ENCODE measurements at regions of chr1 and their contacts with region 1.

Region 1: DNA sequence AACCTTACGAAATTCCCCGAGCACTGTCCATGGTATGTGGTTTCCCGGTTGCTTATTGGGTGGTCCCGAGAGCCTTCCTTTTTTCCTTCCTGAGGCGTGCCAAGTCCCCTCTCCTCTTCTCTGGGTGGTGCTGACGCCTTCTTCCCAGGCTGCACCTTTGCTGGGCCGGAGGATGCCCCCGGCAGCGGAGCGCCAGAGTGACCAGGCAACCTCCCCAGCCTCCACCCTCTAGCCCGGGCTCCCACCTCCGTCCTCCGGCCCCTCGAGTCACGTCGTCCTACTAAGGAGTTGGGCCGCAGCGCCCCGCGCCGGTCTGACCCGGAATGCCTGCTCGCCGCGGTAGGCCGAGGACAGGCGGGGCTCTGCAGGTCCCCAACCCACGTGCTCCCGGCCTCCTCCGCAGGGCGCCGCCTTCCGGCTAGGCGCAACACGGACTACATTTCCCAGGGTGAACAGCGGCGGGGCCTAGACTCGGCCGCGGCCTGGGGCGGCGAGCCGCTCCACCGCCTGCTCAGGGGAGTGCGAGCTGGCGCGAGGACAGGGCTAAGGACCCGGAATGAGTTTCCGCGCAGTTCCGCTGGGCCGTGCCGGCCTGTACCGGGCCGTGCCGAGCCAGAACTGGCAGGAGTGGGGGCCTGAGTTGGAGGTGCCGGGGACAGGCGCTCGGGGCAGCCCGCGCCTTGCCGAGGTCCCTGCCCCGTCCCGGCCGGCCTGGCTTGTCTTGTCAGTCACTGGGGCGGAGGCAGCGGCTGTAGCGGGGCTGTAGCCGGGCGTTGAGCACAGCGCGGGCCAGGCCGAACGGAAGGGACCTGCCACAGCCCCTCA is at the start of gene IPO13:
- DNase-seq: peak; percentile 93 to 99 (median 98)

Region 2: GRCh38 chr1:43367904-43368645 is 578.4 kb before region 1 on chr1 and contains the start of gene ELOVL1:
- intact Hi-C with region 1: no loop called
- DNase-seq: peak; percentile 75 to 96 (median 90)

Region 3: GRCh38 chr1:43974443-43975248 is 28.2 kb after region 1 on chr1 and contains the start of gene ATP6V0B:
- intact Hi-C with region 1: loop called (anchors 1 kb)
- DNase-seq: peak; percentile 96 to 100 (median 99)